ENCODE measurements at regions of chr4 and their contacts with region 1.

Region 1: DNA sequence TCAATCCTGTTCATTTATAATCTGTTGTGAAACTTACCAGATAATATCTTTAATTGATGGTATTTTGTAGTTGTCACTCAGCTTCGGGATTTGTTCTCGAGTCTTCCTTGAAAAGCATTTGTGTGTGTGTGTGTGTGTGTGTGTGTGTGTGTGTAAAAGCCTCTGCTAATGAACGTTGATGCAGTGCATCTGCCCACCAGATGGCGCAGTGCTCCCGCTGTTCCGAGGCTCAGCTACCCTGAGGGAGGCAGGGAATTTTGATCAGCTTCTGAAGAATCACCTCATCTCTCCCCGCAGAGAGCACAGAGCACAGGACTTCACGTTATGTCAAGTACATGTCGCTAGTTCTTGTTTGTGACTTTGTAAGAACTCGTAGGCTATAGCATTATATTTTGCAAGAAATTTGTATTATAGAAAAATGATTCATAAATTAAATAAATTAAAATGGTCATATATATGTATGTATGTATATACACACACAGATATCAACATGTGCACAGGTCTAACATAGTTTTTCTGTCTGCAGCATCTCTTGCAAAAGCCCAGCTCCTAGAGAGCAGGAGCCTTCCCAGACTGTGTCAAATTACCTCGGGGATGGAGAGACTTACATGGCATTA is 316.7 kb upstream of the IGFBP7 start:
- DNase-seq: peak; percentile 47
- H3K4me3 Mint-ChIP-seq: no peak overlapping the region
- H3K27ac Mint-ChIP-seq: no peak overlapping the region
- H3K4me1 Mint-ChIP-seq: no peaks in the 10 kb centered on the region
- H3K27me3 Mint-ChIP-seq: no peaks in the 10 kb centered on the region

Region 2: DNA sequence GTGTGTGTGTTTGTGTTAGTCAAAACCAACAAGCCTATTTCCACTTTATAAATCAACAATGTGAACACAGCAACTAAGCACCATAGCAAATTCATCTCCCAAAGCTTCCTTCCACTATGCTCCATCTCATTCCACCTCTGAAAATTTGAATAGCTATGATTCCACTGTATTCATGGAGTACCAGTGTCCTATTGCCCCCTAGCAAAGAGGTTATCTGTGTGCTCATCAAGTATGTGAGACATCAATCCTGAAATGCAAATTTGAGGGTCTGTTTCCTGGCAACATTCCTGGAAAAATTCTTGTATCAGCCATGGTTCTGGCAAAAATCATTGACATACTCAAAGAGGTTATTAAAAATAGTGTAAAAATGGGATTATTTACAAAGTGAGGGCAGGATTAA is 408.8 kb after region 1 on chr4:
- CTCF ChIA-PET with region 1: no interaction called
- POLR2A ChIA-PET with region 1: no interaction called
- intact Hi-C with region 1: loop called (anchors 5 kb)
- DNase-seq: no peak
- H3K4me3 Mint-ChIP-seq: no peak overlapping the region
- H3K27ac Mint-ChIP-seq: no peak overlapping the region
- H3K4me1 Mint-ChIP-seq: no peaks in the 10 kb centered on the region
- H3K27me3 Mint-ChIP-seq: no peaks in the 10 kb centered on the region